ENCODE measurements at regions of chr9 and their contacts with region 1.

Region 1: GRCh38 chr9:109440797-109441287 is 57.3 kb downstream of the PTPN3 start:
- DNase-seq: peak; percentile 76
- ATAC-seq: peak; percentile 95
- H3K4me3 Mint-ChIP-seq: no peak overlapping the region
- H3K27ac Mint-ChIP-seq: no peak overlapping the region
- H3K4me1 Mint-ChIP-seq: peaks cover 24% of the 10 kb centered on the region
- H3K27me3 Mint-ChIP-seq: peaks cover 28% of the 10 kb centered on the region

Region 2: GRCh38 chr9:109411798-109412352 is 29.0 kb before region 1 on chr9:
- CTCF ChIA-PET with region 1: interaction called, 16 read pairs
- POLR2A ChIA-PET with region 1: interaction called, 6 read pairs
- DNase-seq: peak; percentile 49
- ATAC-seq: peak; percentile 63
- H3K4me3 Mint-ChIP-seq: no peak overlapping the region
- H3K27ac Mint-ChIP-seq: no peak overlapping the region
- H3K4me1 Mint-ChIP-seq: peaks cover 24% of the 10 kb centered on the region
- H3K27me3 Mint-ChIP-seq: peaks cover 11% of the 10 kb centered on the region

Region 3: DNA sequence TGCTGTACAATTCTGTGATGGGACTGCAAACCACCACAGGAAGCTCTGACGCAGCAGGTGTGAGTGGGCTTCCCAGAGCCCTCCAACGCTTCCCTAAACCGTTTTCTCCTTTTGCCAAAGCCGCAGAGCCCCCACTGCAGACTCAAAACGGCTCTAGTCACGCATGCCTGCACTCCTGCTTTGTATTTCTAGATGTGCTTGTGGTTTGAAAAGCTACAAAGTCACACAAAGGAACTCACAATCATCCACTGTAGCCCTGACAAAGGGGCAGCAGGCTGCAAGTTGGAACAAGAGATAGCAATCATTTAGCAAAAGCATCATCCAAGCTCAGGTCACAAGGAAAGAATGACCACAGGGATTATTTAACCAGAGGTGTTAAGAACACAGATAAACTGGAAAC is 22.0 kb before region 1 on chr9:
- CTCF ChIA-PET with region 1: interaction called, 21 read pairs
- POLR2A ChIA-PET with region 1: no interaction called
- DNase-seq: no peak
- ATAC-seq: no peak
- H3K4me3 Mint-ChIP-seq: no peak overlapping the region
- H3K27ac Mint-ChIP-seq: no peak overlapping the region
- H3K4me1 Mint-ChIP-seq: peaks cover 30% of the 10 kb centered on the region
- H3K27me3 Mint-ChIP-seq: peaks cover 8% of the 10 kb centered on the region

Region 4: DNA sequence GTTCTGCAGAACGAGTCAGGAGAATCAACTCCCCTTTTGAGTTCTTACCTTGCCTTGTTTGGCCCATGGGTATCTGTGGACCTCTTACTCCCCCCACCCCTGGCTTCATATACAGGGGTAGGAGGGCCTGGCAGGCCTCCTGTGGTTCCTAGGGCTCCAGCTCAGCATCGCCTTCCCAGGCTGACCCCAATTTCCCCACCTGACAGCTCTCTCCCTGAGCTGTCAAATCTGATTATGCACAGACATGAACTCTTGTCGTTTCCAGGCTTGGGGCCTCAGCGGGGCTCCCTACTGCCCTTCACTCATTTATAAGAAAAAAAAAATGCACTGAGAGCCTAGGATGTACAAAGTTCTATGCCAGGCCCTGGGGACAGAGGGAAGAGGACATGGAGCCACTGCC is 10.6 kb before region 1 on chr9:
- CTCF ChIA-PET with region 1: interaction called, 14 read pairs
- POLR2A ChIA-PET with region 1: no interaction called
- DNase-seq: no peak
- ATAC-seq: no peak
- H3K4me3 Mint-ChIP-seq: no peak overlapping the region
- H3K27ac Mint-ChIP-seq: no peak overlapping the region
- H3K4me1 Mint-ChIP-seq: no peaks in the 10 kb centered on the region
- H3K27me3 Mint-ChIP-seq: peaks cover 15% of the 10 kb centered on the region

Region 5: GRCh38 chr9:109459423-109459822 is 18.6 kb after region 1 on chr9:
- CTCF ChIA-PET with region 1: interaction called, 206 read pairs
- POLR2A ChIA-PET with region 1: no interaction called
- DNase-seq: no peak
- ATAC-seq: no peak
- H3K4me3 Mint-ChIP-seq: no peak overlapping the region
- H3K27ac Mint-ChIP-seq: no peak overlapping the region
- H3K4me1 Mint-ChIP-seq: peaks cover 17% of the 10 kb centered on the region
- H3K27me3 Mint-ChIP-seq: peaks cover 12% of the 10 kb centered on the region

Region 6: DNA sequence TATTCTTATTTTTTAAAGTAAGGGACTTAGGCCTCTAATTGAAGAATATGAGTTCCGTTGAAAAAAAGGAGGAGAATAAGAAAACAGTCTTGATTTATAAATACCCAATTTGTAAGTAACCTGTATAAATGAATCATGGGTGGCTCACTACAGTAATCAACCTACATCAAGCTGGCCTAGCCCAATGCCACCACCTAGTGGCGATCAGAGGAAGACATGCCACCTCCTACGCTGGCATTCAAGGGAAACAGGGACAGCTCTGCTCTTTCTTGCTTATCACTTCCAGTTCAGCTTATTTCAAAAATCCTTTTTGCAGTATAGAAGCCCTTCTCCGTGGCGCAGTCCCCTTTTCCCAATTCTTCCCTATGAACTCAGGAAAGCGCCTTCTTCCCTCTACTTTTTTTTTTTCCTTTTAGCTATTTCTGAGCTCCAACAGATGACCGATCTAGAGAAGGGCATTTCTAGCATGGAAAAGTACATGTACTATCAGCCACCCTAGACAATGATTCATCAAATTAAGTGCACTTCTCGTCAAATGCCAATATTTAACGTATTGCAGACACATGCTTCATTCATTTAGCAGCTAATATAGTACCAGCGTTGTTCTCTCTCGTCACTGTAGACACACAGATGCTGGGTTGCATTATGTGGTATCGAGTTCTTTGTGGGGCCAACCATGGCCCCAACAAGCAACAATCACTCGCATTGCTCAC is 29.0 kb after region 1 on chr9:
- CTCF ChIA-PET with region 1: interaction called, 206 read pairs
- POLR2A ChIA-PET with region 1: interaction called, 4 read pairs
- DNase-seq: peak; percentile 79
- ATAC-seq: peak; percentile 93
- H3K4me3 Mint-ChIP-seq: no peak overlapping the region
- H3K27ac Mint-ChIP-seq: no peak overlapping the region
- H3K4me1 Mint-ChIP-seq: peaks cover 22% of the 10 kb centered on the region
- H3K27me3 Mint-ChIP-seq: peaks cover 20% of the 10 kb centered on the region

Region 7: GRCh38 chr9:109475526-109475925 is 34.7 kb after region 1 on chr9:
- CTCF ChIA-PET with region 1: interaction called, 206 read pairs
- POLR2A ChIA-PET with region 1: interaction called, 4 read pairs
- DNase-seq: no peak
- ATAC-seq: no peak
- H3K4me3 Mint-ChIP-seq: no peak overlapping the region
- H3K27ac Mint-ChIP-seq: no peak overlapping the region
- H3K4me1 Mint-ChIP-seq: no peaks in the 10 kb centered on the region
- H3K27me3 Mint-ChIP-seq: peaks cover 30% of the 10 kb centered on the region

Region 8: GRCh38 chr9:109556061-109556460 is 115.2 kb after region 1 on chr9:
- CTCF ChIA-PET with region 1: no interaction called
- POLR2A ChIA-PET with region 1: no interaction called
- DNase-seq: no peak
- ATAC-seq: no peak
- H3K4me3 Mint-ChIP-seq: no peak overlapping the region
- H3K27ac Mint-ChIP-seq: no peak overlapping the region
- H3K4me1 Mint-ChIP-seq: no peaks in the 10 kb centered on the region
- H3K27me3 Mint-ChIP-seq: no peaks in the 10 kb centered on the region